Sigmoid colon (tissue), 7 donors: ENCODE measurements at regions of chr2 and their contacts with region 1.

Region 1: DNA sequence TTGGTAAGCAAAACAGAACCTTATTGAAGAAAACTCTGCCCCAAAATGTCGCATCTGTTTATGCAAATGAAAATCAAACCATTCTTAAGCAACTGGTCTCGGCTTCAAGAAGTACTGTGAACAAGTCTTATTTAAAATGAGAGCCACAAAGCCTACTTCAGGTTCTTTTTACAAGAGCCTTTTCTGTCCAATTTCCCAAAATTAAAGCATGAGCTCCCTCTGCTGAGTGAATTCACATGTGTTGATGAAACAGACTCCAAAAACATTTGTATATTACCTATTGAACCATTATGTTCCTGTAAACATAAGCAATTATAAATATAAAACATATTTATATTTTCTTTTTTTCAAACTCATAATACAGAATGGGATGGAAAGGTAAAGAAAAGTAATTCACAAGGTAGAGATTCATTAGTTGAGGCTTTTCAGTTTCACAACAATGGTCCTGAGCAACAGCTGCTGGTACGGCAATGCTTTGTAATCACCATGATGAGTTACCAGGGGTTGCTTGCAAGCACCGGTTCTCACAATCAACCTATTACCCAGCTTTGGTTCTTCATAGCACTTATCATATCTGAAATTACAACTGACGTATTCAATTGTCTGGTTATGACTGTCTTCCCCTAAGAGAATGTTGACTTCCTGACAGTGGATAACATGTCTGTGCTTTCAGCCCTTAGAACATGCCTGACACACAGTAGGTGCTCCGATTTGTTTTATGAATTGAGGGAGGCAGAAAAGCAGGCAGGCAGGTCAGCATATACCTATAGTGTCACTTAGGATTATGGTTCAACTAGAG is 108.4 kb upstream of the BZW1 start:
- DNase-seq: no peak
- H3K4me3 ChIP-seq: no peak overlapping the region
- H3K27ac ChIP-seq: no peak overlapping the region
- H3K4me1 ChIP-seq: no peaks in the 10 kb centered on the region
- H3K27me3 ChIP-seq: no peaks in the 10 kb centered on the region
- CTCF ChIP-seq: peak in 2 of 4 experiments; percentile 20 to 32
- EP300 ChIP-seq: no peak
- POLR2A ChIP-seq: no peak

Region 2: DNA sequence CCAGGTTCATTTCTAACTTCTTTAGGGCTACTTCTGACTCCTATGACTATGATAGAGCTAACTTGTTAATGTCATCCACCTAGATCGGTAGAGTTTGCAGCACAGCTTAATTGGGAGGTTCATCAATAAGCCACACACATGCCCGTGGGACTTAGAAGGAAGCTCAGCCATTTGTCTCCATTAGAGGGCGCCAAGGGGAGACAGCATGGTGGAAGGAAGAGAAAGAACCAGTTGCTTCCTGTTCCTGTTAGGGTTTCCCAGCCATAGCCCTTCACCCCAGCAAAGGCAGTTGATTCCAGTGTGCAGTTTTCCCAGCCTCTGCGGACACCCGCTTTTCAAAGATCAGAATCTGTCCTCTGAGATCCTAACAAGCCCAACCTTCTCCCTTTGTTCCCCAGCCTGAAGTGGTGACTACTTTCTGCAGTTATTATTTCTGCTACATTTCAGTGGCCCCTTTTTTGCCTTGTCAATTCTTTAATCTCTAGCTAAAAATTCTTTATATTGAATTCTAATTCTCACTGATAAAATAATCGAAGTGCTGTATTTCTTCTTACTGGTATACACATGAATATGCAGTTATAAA is 717.6 kb before region 1 on chr2:
- intact Hi-C with region 1: loop called (anchors 10 kb)
- DNase-seq: no peak
- H3K4me3 ChIP-seq: no peak overlapping the region
- H3K27ac ChIP-seq: no peak overlapping the region
- H3K4me1 ChIP-seq: no peaks in the 10 kb centered on the region
- H3K27me3 ChIP-seq: no peaks in the 10 kb centered on the region
- CTCF ChIP-seq: peak in 2 of 4 experiments; percentile 31 to 32
- EP300 ChIP-seq: no peak
- POLR2A ChIP-seq: no peak

Region 3: DNA sequence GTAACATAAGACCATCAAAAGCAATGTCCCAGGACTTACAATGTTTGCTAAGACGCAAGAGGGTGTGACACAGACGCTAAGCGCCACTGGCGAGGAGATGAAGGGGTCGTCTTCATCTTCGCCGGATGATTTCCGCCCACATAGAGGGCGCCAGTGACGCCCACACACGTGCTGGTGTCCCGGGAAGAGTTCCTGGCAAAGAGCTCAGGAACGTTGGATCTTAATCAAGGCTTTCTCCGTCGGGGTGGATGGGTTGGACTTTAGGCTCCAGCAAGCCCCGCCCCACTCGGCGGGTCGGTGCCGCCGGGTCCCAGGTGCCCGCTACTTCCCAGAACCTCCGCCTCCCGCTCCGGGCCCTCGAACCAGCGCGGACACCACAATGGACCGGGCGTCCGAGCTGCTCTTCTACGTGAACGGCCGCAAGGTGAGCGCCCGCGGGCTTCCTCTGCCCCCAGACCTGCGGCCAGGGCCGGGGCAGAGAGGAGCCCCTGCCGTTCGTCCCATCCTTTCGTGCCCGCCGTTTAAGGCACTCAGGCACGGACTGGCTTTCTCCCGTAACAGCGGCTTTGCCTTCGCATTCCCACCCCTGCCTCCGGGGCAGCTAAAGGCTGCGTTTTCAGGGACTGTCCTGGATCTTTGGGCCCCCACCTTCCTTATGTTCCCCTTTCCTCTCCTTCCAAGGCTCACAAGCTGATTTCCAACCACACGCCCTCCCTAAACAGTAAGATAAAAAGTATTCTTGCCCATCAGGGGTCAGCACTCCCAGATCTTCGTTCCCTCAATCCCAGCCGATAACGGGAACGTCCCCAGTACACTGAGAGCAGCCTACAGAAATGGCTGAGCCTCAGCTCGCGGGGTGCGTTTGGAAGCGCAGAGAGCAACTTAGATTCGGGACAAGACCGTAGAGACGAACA is 117.3 kb before region 1 on chr2 and contains the start of gene AOX1:
- intact Hi-C with region 1: loop called (anchors 10 kb)
- DNase-seq: peak; percentile 90
- H3K4me3 ChIP-seq: peak within 1 kb of the TSS; percentile 40 to 66 (median 48)
- H3K27ac ChIP-seq: peak within 1 kb of the TSS; percentile 57 to 83 (median 66)
- H3K4me1 ChIP-seq: peaks cover 0 to 8% (median 7%) of the 10 kb centered on the region in 4 donors
- H3K27me3 ChIP-seq: no peaks in the 10 kb centered on the region
- CTCF ChIP-seq: no peak
- EP300 ChIP-seq: no peak
- POLR2A ChIP-seq: no peak
- total RNA-seq, gene AOX1: 20.8 to 65.5 (median 53.9) TPM